SK-N-SH (cell line): ENCODE measurements at regions of chr21 and their contacts with region 1.

Region 1: DNA sequence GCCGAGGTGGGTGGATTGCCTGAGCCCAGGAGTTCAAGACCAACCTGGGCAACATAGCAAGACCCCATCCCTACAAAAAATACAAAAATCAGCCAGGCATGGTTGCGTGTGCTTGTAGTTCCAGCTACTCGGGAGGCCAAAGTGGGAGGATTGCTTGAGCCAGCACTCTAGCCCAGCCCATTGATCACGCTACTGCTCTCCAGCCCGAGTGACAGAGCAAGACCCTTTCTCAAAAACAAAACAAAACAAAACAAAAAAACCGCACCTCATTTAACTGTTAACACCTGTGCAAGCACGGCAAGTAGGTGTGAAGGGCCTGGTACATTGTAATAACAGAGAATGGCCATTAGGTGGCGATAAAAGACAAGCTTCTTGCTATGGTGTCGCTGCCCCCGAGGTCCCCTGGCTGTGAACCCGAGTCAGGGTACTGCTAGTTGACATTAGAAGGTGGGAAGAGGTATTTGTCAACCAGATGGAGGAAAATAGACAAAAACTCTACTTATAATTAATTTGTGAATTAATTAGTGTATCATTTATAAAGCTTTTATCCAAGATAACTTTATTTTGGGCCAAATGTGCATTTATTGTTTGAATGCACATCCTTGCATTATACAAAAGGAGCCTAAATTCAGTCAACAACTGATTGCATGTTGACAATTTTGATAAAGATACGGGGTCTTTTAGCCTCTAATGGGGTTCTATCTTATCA is 66.5 kb downstream of the SH3BGR start:
- DNase-seq: peak; percentile 87
- H3K4me3 ChIP-seq: no peak overlapping the region; a peak in 1 of 4 replicates
- H3K27ac ChIP-seq: no peak overlapping the region
- H3K4me1 ChIP-seq: no peaks in the 10 kb centered on the region
- H3K27me3 ChIP-seq: no peaks in the 10 kb centered on the region
- CTCF ChIP-seq: peak; percentile 97
- EP300 ChIP-seq: no peak
- RAD21 ChIP-seq: peak; percentile 99

Region 2: DNA sequence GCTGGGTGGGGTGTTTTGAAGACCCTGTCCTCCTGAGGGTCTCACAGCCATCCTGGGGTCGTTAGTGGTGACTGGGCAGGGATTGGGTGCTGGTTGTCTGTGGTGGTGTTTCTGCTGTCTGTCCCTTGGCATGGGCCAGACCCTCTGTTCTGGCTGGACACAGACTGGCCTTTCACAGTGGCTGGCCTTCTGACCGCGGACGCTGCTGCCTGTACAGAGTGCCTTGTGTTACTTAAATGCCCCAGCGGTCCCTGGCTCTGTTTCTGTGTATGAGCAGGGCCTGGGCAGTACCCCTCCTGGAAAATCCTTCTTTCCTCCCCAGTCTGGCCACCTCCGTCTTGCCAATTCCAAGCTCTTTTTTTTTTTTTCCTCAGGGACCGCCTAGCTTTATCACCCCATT is 15.7 kb before region 1 on chr21:
- CTCF ChIA-PET with region 1: interaction called, 20 read pairs
- POLR2A ChIA-PET with region 1: no interaction called
- DNase-seq: no peak
- H3K4me3 ChIP-seq: no peak overlapping the region
- H3K27ac ChIP-seq: no peak overlapping the region
- H3K4me1 ChIP-seq: no peaks in the 10 kb centered on the region
- H3K27me3 ChIP-seq: no peaks in the 10 kb centered on the region
- CTCF ChIP-seq: no peak
- EP300 ChIP-seq: no peak
- RAD21 ChIP-seq: no peak

Region 3: DNA sequence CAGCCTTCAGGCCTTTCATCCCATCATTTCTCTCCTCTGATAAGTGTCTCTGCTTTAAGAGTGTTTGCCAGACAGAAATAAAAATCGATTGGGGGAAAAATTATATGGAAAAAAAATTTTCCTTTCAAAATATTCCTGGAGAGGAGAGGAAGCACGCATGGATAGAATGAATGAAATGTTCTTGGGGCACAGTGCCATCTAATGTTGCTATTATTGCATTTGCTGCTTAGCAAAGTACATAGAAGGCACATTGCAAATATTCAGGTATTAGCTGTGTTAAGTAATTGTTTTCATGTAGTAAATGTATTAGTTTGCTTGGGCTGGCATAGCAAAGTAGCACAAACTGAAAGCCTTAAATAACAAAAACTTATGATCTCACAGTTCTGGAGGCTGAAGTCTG is 112.5 kb after region 1 on chr21:
- CTCF ChIA-PET with region 1: interaction called, 14 read pairs
- POLR2A ChIA-PET with region 1: no interaction called
- DNase-seq: no peak
- H3K4me3 ChIP-seq: no peak overlapping the region
- H3K27ac ChIP-seq: peak overlapping the region in 1 of 2 experiments; percentile 19; a peak in 2 of 4 replicates
- H3K4me1 ChIP-seq: peaks cover 0 to 19% of the 10 kb centered on the region in 2 experiments; a peak in 2 of 4 replicates
- H3K27me3 ChIP-seq: no peaks in the 10 kb centered on the region
- CTCF ChIP-seq: 0 out of 2 replicates have a peak, but pooled peaks have one; percentile 25
- EP300 ChIP-seq: no peak
- RAD21 ChIP-seq: peak; percentile 37; the same call in 1 of the 2 replicates

Region 4: DNA sequence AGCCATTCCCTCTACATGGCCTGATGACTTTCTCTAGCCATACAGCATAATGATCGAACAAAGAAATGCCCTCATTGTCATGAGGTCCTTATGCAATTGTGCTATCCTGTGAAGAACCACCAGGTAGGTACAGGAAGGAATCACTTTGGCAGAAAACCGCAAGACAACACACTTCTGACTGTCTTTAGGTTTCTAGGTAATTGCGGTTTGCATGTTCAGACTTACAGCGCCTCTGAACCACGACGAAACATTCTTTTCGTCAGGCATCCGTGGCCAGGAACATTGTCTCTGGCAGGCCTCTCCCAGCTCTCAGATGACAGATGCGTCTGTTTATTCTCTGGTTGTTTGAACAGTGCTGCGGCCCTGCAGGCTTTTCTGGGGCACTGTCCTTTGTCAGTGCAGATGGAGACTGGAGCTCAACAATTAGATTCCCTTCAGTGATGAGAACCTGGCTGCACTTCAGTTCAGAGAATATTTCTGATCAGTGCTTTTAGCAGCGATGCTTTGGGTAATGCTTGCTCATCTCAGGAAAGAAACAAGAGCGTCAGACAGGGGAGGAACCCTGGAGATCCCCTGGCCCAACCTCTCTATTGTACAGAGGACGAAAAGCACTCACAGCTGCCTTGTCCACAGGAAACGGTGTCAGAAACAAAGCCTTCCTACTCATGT is 157.8 kb after region 1 on chr21:
- CTCF ChIA-PET with region 1: interaction called, 10 read pairs
- POLR2A ChIA-PET with region 1: no interaction called
- DNase-seq: peak; percentile 88
- H3K4me3 ChIP-seq: no peak overlapping the region
- H3K27ac ChIP-seq: peak overlapping the region; percentile 65 to 99
- H3K4me1 ChIP-seq: peaks cover 0 to 44% of the 10 kb centered on the region in 2 experiments; a peak in 2 of 4 replicates
- H3K27me3 ChIP-seq: no peaks in the 10 kb centered on the region
- CTCF ChIP-seq: no peak
- EP300 ChIP-seq: peak; percentile 31 to 98; a peak in 2 of 4 replicates
- RAD21 ChIP-seq: no peak; the same call in 1 of the 2 replicates

Region 5: DNA sequence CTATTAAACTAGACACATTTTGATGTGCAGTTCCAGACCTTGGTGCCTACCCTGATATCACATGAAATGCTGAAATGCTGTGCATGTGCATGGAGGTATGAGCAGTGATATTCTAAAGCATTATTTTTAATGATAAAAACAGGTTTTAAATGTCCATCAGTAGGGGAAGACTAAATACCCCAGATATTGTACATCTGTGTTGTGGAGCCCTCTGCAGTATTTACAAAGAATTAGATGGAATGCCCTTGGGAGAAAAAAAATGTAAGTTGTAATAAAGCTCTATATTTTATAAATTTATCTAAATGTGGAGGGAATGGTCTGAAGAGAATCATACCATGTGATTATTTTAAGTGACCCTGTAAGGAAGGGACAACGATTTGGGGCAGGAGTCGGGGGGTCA is 187.6 kb after region 1 on chr21:
- CTCF ChIA-PET with region 1: interaction called, 244 read pairs
- POLR2A ChIA-PET with region 1: no interaction called
- DNase-seq: no peak
- H3K4me3 ChIP-seq: no peak overlapping the region
- H3K27ac ChIP-seq: no peak overlapping the region
- H3K4me1 ChIP-seq: no peaks in the 10 kb centered on the region
- H3K27me3 ChIP-seq: no peaks in the 10 kb centered on the region
- CTCF ChIP-seq: peak; percentile 43
- EP300 ChIP-seq: no peak
- RAD21 ChIP-seq: peak; percentile 57

Region 6: GRCh38 chr21:39715804-39716397 is 197.6 kb after region 1 on chr21:
- CTCF ChIA-PET with region 1: interaction called, 244 read pairs
- POLR2A ChIA-PET with region 1: no interaction called
- DNase-seq: peak; percentile 54
- H3K4me3 ChIP-seq: no peak overlapping the region; a peak in 1 of 4 replicates
- H3K27ac ChIP-seq: no peak overlapping the region
- H3K4me1 ChIP-seq: no peaks in the 10 kb centered on the region
- H3K27me3 ChIP-seq: no peaks in the 10 kb centered on the region
- CTCF ChIP-seq: peak; percentile 76
- EP300 ChIP-seq: no peak
- RAD21 ChIP-seq: peak; percentile 80

Region 7: DNA sequence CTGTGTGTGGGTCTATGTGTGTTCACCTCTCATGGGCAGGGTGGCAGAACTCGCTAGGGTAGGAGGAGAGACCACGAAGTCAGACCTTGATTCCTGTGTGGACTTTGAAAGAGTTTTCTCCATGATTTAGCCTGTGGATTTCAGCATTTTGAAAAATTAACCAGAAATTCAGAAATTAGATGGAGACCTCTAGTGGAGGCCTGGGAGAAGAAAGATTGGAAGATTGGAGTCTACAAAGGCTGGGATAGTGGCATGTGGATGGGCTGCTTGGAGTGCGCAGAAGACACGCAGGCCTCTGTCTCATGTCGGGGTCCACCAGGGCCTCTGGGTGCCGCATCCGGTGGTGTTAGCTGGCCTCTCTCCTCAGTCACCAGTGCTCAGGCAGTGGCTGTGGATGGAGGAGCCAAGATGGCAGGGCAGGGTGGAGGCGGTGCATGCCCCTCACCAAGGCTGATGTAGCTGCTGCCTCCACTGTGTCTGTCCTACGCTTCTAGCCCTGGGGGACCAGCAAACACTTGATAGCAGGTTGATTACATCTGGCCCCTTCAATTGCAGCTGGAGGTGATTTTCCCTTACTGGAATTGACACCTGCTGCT is 207.9 kb after region 1 on chr21:
- CTCF ChIA-PET with region 1: interaction called, 30 read pairs
- POLR2A ChIA-PET with region 1: no interaction called
- DNase-seq: no peak
- H3K4me3 ChIP-seq: no peak overlapping the region
- H3K27ac ChIP-seq: no peak overlapping the region
- H3K4me1 ChIP-seq: peaks cover 0 to 3% of the 10 kb centered on the region in 2 experiments; a peak in 2 of 4 replicates
- H3K27me3 ChIP-seq: no peaks in the 10 kb centered on the region
- CTCF ChIP-seq: peak; percentile 26
- EP300 ChIP-seq: no peak
- RAD21 ChIP-seq: no peak